ENCODE measurements at regions of chr9 and their contacts with region 1.

Region 1: DNA sequence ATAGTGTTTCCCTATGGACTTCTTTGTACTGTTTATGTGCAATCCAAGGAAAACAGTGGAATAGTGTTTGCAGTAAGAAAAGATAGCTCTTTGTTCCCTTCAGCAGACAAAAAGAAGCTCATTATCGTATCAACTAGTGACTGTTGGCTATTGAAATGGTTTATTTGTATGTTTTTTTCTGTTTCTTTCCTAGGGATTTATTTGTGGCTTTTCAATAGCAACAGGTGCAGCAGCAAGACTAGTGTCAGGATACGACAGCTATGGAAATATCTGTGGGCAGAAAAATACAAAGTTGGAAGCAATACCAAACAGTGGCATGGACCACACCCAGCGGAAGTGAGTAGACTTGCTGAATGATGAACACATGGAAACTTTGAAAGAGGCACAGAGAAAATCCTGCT is 65.1 kb downstream of the SLC44A1 start:
- DNase-seq: no peak
- H3K4me3 ChIP-seq: no peak overlapping the region
- H3K27ac ChIP-seq: no peak overlapping the region
- H3K4me1 ChIP-seq: peaks cover 15% of the 10 kb centered on the region
- CTCF ChIP-seq: no peak

Region 2: DNA sequence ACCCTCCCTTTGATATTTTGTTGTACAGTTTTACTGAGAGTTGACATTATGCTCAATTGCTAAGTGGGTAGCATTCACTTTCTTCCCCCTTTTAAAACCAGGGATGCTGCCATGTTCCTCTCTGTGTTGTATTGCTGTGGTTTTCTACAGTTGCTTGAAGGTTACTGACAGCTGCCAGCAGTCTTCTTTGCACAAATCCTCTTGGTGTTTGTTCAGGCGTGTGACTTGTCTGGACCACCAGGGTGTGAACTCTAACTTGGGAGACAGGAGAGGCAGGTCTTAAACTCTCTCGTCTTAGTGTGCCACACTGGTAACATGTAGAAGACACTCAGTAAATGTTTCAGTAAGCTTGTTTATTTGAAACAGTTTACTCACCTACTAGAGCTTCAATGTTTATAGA is 39.9 kb before region 1 on chr9:
- CTCF ChIA-PET with region 1: no interaction called
- POLR2A ChIA-PET with region 1: interaction called, 11 read pairs
- intact Hi-C with region 1: loop called (anchors 5 kb)
- DNase-seq: no peak
- H3K4me3 ChIP-seq: no peak overlapping the region
- H3K27ac ChIP-seq: no peak overlapping the region
- H3K4me1 ChIP-seq: peaks cover 4% of the 10 kb centered on the region
- CTCF ChIP-seq: no peak

Region 3: GRCh38 chr9:105275938-105276337 is 33.6 kb before region 1 on chr9:
- CTCF ChIA-PET with region 1: no interaction called
- POLR2A ChIA-PET with region 1: interaction called, 11 read pairs
- intact Hi-C with region 1: no loop called
- DNase-seq: no peak
- H3K4me3 ChIP-seq: no peak overlapping the region
- H3K27ac ChIP-seq: no peak overlapping the region
- H3K4me1 ChIP-seq: no peaks in the 10 kb centered on the region
- CTCF ChIP-seq: no peak

Measured in OCI-LY7 (cell line).